Dendritic cell treated with granulocyte-macrophage colony-stimulating factor and Interleukin-4, amounts not matched to agents 40 ng/mL and 50 ng/mL, for 4 days (primary cell): ENCODE measurements at regions of chr13 and their contacts with region 1.

Region 1: GRCh38 chr13:71879129-71879535 is 12.1 kb upstream of the DACH1 start:
- H3K4me3 Mint-ChIP-seq: no peak overlapping the region
- H3K27ac Mint-ChIP-seq: no peak overlapping the region
- H3K4me1 Mint-ChIP-seq: peaks cover 5% of the 10 kb centered on the region
- H3K27me3 Mint-ChIP-seq: no peaks in the 10 kb centered on the region

Region 2: DNA sequence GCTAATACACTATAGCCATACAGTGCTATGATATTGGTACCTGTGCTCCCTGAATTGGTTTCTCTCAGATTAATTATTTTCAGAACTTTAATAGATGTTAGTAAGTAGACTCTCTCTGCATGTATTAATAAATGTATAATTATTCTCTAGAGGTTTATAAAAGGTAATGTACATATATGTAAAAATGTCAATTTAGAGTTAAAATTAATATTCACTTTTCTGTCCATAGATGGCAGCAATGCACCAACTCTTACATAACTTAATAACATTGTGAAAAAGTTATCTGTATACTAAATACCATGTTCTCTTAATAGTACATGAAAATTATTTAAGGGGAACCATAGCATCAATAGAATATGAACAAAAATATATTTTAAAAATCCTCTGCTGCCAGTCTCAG is 1255.9 kb before region 1 on chr13:
- intact Hi-C with region 1: loop called (anchors 10 kb)
- H3K4me3 Mint-ChIP-seq: no peak overlapping the region
- H3K27ac Mint-ChIP-seq: no peak overlapping the region
- H3K4me1 Mint-ChIP-seq: no peaks in the 10 kb centered on the region
- H3K27me3 Mint-ChIP-seq: no peaks in the 10 kb centered on the region

Region 3: DNA sequence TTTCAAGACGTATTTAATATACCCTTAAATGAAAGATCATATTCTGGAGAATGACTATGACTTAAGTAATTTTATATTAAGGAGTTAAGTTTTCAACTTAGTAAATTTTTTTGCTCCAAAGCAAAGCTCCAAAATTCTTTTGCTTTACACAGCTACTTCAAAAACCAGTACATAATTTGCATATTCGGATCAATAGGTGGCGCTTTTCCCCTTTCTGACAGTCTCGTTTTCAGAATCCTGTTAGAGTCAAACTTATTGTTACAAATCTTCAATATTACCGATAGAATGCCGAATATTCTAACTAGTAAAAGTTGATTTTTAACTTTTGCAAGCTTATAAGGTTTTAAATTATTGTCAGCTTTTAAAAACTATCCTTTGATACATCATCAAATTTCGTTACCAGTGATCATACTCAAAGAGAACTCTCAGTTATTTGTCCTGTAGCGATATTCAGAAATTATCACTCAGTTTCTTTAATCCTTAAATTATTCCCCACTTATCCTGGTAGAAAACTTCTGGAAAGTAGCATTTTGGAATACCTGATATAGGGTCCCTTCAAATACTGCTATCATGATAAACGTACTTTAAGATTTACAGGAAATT is 918.2 kb before region 1 on chr13:
- intact Hi-C with region 1: loop called (anchors 2 kb)
- H3K4me3 Mint-ChIP-seq: no peak overlapping the region
- H3K27ac Mint-ChIP-seq: no peak overlapping the region
- H3K4me1 Mint-ChIP-seq: no peaks in the 10 kb centered on the region
- H3K27me3 Mint-ChIP-seq: no peaks in the 10 kb centered on the region

Region 4: DNA sequence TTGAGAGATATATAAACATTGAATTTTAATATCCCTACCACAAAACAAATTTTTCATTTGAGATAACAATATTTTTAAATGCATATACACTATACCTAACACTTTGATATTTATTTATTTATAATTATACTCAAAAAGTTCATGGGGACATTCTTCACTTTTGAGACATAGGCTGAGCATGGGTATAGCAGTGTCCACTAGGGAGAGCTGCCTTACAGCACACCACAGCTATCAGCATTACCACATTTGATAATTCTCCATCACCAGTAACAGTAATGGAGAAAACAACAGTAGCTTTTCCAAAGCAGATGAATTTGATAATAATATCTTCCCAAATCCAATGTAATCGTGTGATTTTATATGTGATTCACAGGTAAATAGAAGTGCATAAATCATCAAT is 638.2 kb before region 1 on chr13:
- intact Hi-C with region 1: loop called (anchors 2 kb)
- H3K4me3 Mint-ChIP-seq: no peak overlapping the region
- H3K27ac Mint-ChIP-seq: no peak overlapping the region
- H3K4me1 Mint-ChIP-seq: no peaks in the 10 kb centered on the region
- H3K27me3 Mint-ChIP-seq: no peaks in the 10 kb centered on the region

Region 5: DNA sequence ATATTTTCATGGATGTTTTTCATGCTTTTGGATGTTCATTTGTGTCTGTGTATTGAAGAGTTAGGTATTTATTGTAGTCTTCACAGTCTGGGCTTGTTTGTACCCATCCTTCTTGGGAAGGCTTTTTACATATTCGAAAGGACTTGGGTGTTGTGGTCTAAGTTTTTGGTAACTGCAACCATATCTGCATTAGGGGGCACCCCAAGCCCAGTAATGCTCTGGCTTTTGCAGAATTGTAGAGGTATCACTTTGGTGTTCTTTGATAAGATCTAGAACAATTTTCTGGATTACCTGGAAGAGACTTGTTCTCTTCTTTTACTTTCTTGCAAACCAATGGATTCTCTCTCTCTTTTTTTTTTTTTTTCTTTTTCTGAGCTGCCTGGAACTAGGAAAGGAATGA is 593.4 kb before region 1 on chr13:
- intact Hi-C with region 1: loop called (anchors 10 kb)
- H3K4me3 Mint-ChIP-seq: no peak overlapping the region
- H3K27ac Mint-ChIP-seq: no peak overlapping the region
- H3K4me1 Mint-ChIP-seq: no peaks in the 10 kb centered on the region
- H3K27me3 Mint-ChIP-seq: no peaks in the 10 kb centered on the region

Region 6: DNA sequence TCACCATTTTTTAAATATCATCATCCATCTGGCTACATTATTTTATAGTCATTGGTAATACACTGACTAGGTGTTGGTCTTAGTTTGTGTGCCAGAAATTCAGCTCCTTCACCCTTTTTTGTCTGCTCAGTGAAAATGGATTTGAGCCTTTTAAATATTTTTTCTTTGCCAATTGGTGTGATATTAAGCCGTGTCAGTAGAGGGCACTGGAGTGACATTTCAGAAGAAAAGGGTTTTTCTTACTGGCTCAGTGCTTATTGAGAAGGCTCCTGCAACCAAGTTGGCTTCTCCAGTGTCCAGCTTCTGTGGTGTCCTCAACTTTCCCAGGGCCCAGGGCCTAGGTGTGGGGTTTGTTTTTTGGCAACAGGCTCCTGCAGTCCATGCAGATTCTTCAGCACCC is 558.7 kb before region 1 on chr13:
- intact Hi-C with region 1: loop called (anchors 1 kb)
- H3K4me3 Mint-ChIP-seq: no peak overlapping the region
- H3K27ac Mint-ChIP-seq: no peak overlapping the region
- H3K4me1 Mint-ChIP-seq: no peaks in the 10 kb centered on the region
- H3K27me3 Mint-ChIP-seq: no peaks in the 10 kb centered on the region

Region 7: DNA sequence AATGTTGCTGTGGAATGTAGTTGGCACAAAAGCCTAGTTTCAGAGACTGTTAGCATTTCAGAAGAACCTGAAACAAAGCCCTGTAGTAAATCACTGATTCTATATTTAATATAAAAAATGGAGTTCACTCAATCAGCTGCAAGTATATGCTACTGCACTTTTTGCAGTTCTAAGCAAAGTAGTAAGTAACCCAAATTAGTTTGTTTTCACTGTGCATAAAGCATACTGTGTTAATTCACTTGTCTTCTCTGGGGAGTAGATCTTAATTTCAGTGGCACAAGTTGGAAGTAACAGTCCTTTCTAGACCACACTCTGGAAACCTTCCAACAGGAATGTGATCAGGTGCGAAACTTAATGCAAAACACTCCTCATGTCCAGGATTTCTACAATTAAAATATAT is 151.5 kb before region 1 on chr13:
- intact Hi-C with region 1: no loop called
- H3K4me3 Mint-ChIP-seq: no peak overlapping the region
- H3K27ac Mint-ChIP-seq: no peak overlapping the region
- H3K4me1 Mint-ChIP-seq: peaks cover 4% of the 10 kb centered on the region
- H3K27me3 Mint-ChIP-seq: no peaks in the 10 kb centered on the region

Region 8: GRCh38 chr13:72788831-72789230 is 909.7 kb after region 1 on chr13:
- intact Hi-C with region 1: loop called (anchors 5 kb)
- H3K4me3 Mint-ChIP-seq: no peak overlapping the region
- H3K27ac Mint-ChIP-seq: peak overlapping the region; percentile 38
- H3K4me1 Mint-ChIP-seq: peaks cover 18% of the 10 kb centered on the region
- H3K27me3 Mint-ChIP-seq: no peaks in the 10 kb centered on the region